SK-N-SH (cell line): ENCODE measurements at regions of chr1 and their contacts with region 1.

Region 1: GRCh38 chr1:50929376-50929958 is 30.6 kb downstream of the FAF1 start:
- DNase-seq: peak; percentile 27
- H3K4me3 ChIP-seq: no peak overlapping the region
- H3K27ac ChIP-seq: no peak overlapping the region
- H3K4me1 ChIP-seq: no peaks in the 10 kb centered on the region
- H3K27me3 ChIP-seq: no peaks in the 10 kb centered on the region
- CTCF ChIP-seq: peak; percentile 74
- EP300 ChIP-seq: no peak
- RAD21 ChIP-seq: peak; percentile 69

Region 2: GRCh38 chr1:50603274-50604271 is 325.9 kb before region 1 on chr1:
- CTCF ChIA-PET with region 1: no interaction called
- POLR2A ChIA-PET with region 1: no interaction called
- DNase-seq: no peak
- H3K4me3 ChIP-seq: no peak overlapping the region; a peak in 1 of 4 replicates
- H3K27ac ChIP-seq: peak overlapping the region; percentile 80 to 89
- H3K4me1 ChIP-seq: peaks cover 2 to 18% of the 10 kb centered on the region in 2 experiments
- H3K27me3 ChIP-seq: no peaks in the 10 kb centered on the region
- CTCF ChIP-seq: no peak
- EP300 ChIP-seq: peak in 1 of 2 experiments; percentile 86; a peak in 2 of 4 replicates
- RAD21 ChIP-seq: no peak

Region 3: DNA sequence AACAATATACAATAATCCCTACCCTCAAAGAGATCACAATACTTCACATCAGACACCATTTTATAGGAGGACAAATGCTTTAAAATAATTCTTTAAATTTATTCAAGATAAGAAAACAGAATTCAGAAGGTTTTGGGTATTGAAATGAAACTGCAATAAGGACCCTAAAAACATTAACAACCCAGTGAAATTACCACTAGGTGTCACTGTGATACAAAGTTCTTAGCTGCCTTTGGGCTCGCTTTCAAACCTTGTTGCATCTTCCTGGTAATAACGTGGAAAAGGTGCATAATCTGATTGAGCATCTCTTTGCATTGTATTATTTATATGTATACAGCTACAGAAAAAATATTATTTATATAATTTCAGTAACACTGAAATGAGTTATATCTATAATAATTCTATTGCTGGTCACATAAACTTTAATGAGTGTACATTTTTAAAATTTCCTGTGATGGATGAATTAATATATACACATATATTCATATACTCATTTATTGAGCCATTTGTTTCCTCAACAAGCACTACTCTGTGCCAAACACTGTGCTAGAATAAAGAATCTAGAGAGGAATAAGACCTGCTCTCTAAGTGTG is 154.6 kb before region 1 on chr1:
- CTCF ChIA-PET with region 1: interaction called, 13 read pairs
- POLR2A ChIA-PET with region 1: no interaction called
- DNase-seq: peak; percentile 55
- H3K4me3 ChIP-seq: no peak overlapping the region
- H3K27ac ChIP-seq: no peak overlapping the region
- H3K4me1 ChIP-seq: no peaks in the 10 kb centered on the region
- H3K27me3 ChIP-seq: no peaks in the 10 kb centered on the region
- CTCF ChIP-seq: peak; percentile 82
- EP300 ChIP-seq: no peak
- RAD21 ChIP-seq: peak; percentile 84

Region 4: DNA sequence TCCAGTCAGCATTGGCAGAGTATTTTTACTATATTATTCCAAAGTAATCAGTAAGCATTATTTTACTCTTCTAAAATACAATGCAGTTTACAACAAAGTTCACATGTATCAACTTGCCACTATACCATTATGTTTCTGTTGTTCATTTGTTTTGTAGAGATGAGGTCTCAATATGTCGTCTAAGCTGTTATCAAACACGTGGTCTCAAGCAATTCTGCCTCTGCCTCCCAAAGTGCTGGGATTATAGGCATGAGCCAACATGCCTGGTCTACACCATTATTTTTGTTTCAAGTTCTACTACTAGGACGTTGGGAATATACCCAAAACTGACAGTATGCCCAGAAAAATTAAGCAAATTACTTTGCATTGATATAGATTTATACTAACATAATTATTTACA is 10.8 kb after region 1 on chr1:
- CTCF ChIA-PET with region 1: interaction called, 43 read pairs
- POLR2A ChIA-PET with region 1: no interaction called
- DNase-seq: no peak
- H3K4me3 ChIP-seq: no peak overlapping the region
- H3K27ac ChIP-seq: no peak overlapping the region
- H3K4me1 ChIP-seq: no peaks in the 10 kb centered on the region; a peak in 1 of 4 replicates
- H3K27me3 ChIP-seq: no peaks in the 10 kb centered on the region
- CTCF ChIP-seq: no peak
- EP300 ChIP-seq: no peak
- RAD21 ChIP-seq: no peak

Region 5: DNA sequence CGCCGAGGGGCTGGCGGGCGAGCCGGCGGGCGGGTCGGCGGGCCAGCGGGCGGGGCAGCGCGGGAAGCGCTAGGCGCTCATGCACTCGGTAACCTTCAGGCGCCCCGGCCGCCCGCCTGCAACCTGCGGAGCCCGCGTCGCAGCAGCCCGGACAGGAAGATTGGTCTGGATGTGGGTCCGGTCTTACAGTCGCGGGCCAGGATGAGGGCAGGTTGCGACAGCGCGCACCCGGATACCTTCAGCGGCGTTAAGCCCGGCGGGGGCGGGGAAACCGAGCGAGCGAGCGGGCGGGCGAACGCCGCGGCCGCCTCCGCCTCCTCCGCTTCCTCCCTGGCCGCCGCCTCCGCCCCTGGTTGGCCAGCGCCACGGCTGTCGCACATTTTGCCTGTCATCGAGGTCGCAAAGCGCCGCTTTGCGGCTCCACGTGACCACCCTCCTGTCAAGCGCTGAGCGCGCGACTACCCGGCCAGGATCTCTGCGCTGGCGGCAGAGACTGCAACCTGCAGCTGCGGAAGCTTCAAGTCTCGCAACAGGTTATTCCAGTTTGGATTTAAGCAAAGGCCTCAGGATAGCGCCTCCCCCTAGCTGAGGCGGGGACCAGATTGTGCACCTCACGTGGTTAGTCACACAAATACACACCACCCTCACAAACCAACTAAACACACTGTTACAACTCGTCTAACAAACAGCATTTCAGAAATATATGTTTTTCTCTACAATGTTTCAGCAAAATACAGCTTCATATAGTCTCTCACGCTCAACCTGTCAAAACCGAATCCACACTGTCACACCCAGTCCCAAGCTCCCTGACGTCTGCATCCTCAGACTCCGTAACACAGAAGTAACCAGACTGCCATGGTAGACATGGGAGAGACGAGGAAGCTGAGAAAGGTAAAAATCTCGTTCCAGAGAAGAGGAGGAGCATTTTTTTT is 30.7 kb after region 1 on chr1 and contains the start of gene FAF1:
- CTCF ChIA-PET with region 1: interaction called, 13 read pairs
- POLR2A ChIA-PET with region 1: no interaction called
- DNase-seq: peak; percentile 97
- H3K4me3 ChIP-seq: peak within 1 kb of the TSS; percentile 56 to 89
- H3K27ac ChIP-seq: peak within 1 kb of the TSS; percentile 65 to 88
- H3K4me1 ChIP-seq: peaks cover 0 to 2% of the 10 kb centered on the region in 2 experiments; a peak in 2 of 4 replicates
- H3K27me3 ChIP-seq: no peaks in the 10 kb centered on the region
- CTCF ChIP-seq: peak; percentile 32
- EP300 ChIP-seq: no peak
- RAD21 ChIP-seq: no peak
- polyA plus RNA-seq, gene FAF1: 8.7 and 9.7 TPM in 2 replicates

Region 6: DNA sequence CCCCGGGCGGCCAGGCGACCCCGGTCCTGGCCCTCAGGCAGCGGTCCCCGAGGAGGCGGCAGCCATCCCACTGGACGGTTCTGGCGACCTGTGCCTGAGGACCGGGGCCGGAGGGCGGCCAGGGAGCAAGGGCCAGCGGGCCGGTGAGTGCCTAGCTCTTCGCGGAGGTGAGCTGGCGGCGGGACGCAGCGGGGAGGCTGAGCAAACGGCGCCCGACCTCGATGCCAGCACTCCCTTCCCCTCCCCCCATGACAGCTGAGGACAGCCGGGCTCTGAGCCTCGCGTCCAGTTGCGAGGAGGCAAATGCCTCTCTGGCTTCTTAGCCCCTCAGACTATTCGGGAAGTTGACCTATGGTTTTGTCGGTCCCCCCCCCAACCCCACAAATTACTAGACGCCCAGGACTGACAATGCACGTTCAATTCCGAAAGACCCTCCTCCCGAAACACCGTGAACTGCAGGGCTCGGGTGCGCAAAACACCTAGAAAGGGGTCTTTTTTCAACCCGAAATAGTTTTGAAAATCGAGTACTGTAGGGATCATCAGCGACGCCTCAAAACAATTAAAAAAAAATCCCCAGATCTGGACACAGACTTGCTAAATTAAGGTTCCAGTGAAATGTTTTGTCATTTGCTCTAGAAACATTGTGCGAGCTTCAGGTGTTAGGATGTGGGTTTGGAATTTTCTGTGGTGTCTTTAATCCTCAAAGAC is 48.8 kb after region 1 on chr1:
- CTCF ChIA-PET with region 1: interaction called, 14 read pairs
- POLR2A ChIA-PET with region 1: no interaction called
- DNase-seq: peak; percentile 82
- H3K4me3 ChIP-seq: peak overlapping the region; percentile 84 to 90
- H3K27ac ChIP-seq: peak overlapping the region; percentile 94 to 96
- H3K4me1 ChIP-seq: peaks cover 14 to 26% of the 10 kb centered on the region in 2 experiments; a peak in 3 of 4 replicates
- H3K27me3 ChIP-seq: no peaks in the 10 kb centered on the region
- CTCF ChIP-seq: no peak
- EP300 ChIP-seq: no peak
- RAD21 ChIP-seq: no peak